ENCODE measurements at regions of chr19 and their contacts with region 1.

Region 1: DNA sequence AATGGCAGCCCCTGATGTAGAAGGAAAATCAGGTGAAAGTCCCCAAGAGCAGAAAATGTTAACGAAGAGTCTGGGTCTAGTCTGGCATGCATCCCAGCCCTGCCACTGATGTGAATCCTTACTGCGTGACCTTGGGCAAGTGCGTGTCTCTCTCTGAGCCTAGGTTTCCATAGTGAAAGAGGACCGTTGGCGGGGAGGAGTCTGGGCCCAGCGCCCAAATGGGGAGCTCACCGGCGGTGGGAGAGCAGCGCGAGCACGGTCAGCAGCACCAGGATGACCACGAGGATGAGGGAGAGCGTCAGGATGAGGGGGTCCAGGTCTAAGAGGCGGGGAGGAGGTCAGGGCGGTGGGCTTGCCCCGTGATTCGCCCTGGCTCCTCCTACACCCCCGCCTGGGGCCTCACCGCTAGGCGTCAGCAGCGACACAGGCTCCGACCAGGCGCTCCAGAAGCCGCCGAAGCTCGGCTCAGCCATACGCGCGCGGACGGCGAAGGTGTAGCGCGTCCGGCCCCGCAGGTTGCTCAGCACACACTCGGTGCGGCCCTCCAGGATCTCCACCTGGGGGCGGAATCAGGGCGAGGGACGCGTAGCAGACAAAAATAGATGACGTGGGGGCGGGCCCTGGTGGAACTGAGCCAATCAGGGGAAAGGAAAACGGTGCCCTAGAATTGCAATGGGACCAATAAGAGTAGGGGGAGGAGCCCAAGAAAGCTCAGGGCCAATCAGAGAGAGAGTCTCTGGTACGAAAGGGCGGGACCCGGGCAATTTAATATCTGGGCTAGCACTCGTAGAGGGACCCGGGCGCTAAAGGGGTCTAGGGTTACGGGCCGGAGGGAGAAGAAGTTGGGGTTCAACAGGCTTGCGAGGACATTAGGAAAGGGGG is 3.2 kb downstream of the EPOR start:
- DNase-seq: peak; percentile 95
- H3K4me3 Mint-ChIP-seq: peak overlapping the region; percentile 80
- H3K27ac Mint-ChIP-seq: peak overlapping the region; percentile 90
- H3K4me1 Mint-ChIP-seq: peaks cover 29% of the 10 kb centered on the region
- H3K27me3 Mint-ChIP-seq: no peaks in the 10 kb centered on the region
- CTCF ChIP-seq: peak; percentile 33

Region 2: GRCh38 chr19:11408591-11408990 is 27.7 kb after region 1 on chr19:
- CTCF ChIA-PET with region 1: no interaction called
- intact Hi-C with region 1: no loop called
- DNase-seq: no peak
- H3K4me3 Mint-ChIP-seq: no peak overlapping the region
- H3K27ac Mint-ChIP-seq: no peak overlapping the region
- H3K4me1 Mint-ChIP-seq: no peaks in the 10 kb centered on the region
- H3K27me3 Mint-ChIP-seq: no peaks in the 10 kb centered on the region
- CTCF ChIP-seq: no peak

Region 3: DNA sequence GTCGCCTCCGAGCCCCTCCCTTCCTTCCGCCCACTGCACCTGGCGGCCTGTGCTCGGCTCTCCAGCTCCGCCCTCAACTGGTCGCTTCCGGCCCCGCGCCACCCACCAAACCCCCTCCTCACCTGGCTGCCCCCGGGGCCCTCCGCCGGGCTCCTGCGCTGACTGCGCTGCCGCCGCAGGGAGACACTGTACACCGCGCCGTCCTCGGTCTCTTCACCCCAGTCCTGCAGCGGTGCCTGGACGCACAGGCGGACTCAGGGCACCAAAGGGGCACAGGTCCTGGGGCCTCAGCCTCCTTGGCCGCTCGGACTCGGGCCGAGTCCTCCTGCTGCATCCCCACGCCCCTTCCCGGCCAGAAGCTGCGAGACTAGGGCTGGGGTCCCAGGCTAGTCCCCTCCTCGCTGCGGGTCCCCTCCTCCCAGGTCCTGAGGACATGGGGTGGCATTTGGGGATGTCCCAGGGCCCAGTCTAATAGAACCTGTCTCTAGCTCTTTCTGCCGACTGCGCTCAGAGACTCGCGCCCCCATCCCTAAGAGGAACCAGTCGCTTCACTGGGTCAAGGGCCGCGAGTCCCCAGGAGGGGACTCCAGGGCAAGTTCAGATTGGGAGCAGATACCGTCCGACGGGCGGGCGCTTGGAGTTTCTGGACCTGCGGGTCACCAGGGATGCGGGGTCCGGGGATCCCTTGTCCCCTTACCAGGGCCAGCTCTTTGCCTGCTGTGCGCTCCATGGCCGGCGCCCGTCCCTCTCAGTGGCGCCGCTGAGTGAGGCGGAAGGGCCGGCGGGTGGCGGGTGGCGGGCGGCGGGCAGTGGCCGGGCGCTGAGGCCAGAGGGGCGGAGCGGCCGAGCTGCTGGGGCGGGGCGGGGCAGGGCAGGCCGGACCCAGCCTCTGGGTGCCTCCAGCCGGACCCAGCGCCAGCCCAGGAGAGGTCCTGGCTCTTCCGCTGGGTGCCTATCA is 37.9 kb after region 1 on chr19 and contains the start of gene RGL3:
- CTCF ChIA-PET with region 1: interaction called, 7 read pairs
- intact Hi-C with region 1: loop called (anchors 5 kb)
- DNase-seq: peak; percentile 58
- H3K4me3 Mint-ChIP-seq: peak within 1 kb of the TSS; percentile 83
- H3K27ac Mint-ChIP-seq: no peak within 1 kb of the TSS
- H3K4me1 Mint-ChIP-seq: peaks cover 10% of the 10 kb centered on the region
- H3K27me3 Mint-ChIP-seq: peaks cover 13% of the 10 kb centered on the region
- CTCF ChIP-seq: no peak
- total RNA-seq, gene RGL3: 83.1 and 84.1 TPM in 2 replicates

Region 4: GRCh38 chr19:11435058-11435832 is 54.4 kb after region 1 on chr19 and contains the starts of genes ODAD3 and PRKCSH:
- CTCF ChIA-PET with region 1: interaction called, 14 read pairs
- intact Hi-C with region 1: no loop called
- DNase-seq: peak; percentile 96
- H3K4me3 Mint-ChIP-seq: peak within 1 kb of the TSS; percentile 91
- H3K27ac Mint-ChIP-seq: peak within 1 kb of the TSS; percentile 88
- H3K4me1 Mint-ChIP-seq: no peaks in the 10 kb centered on the region
- H3K27me3 Mint-ChIP-seq: no peaks in the 10 kb centered on the region
- CTCF ChIP-seq: peak; percentile 70
- total RNA-seq, gene ODAD3: not detected in 2 replicates
- total RNA-seq, gene PRKCSH: 298 and 318 TPM in 2 replicates